ENCODE measurements at regions of chr17 and their contacts with region 1.

Region 1: DNA sequence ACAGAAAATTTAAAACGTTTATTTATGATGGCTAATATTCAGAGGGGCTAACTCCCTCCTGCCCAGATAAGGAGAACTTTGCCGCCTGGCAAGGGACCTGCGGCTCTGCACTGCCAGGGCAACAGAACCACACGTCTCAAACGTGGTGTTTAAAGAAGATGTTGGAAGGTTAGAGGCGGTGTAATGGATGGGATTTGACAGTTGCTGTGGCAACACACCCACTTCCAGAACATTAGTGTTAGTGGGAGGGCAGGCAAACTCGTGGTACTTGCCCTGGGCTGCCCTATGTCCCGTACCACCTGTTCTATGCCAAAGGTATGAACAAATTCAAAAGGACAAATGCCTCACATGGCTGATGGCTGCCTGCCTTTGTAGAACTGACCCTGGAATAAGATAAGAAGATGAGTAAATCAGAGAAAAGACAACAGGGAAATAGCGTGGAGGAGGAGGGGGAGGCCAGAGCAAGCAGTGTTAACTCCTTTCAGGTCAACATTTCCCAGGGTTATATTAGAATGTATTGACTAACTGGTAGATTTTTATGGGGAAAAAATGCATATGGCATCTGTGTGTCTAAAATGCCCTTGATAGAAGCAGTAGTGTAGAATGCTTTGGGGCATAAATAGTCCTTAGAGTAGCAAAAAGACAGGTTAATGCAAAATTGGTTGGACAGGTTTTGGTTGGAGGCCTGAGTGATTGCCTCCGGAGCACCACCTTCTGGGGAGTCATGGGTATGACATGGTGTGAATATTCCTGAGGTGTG is 30.8 kb downstream of the HLF start:
- DNase-seq: peak; percentile 70 to 84
- H3K4me3 ChIP-seq: no peak overlapping the region
- H3K4me3 Mint-ChIP-seq: peak overlapping the region; percentile 35
- H3K27ac Mint-ChIP-seq: peak overlapping the region; percentile 20
- H3K4me1 ChIP-seq: peaks cover 20% of the 10 kb centered on the region
- H3K4me1 Mint-ChIP-seq: peaks cover 13% of the 10 kb centered on the region
- H3K27me3 ChIP-seq: no peaks in the 10 kb centered on the region
- H3K27me3 Mint-ChIP-seq: no peaks in the 10 kb centered on the region
- CTCF ChIP-seq: peak; percentile 89 to 92

Region 2: DNA sequence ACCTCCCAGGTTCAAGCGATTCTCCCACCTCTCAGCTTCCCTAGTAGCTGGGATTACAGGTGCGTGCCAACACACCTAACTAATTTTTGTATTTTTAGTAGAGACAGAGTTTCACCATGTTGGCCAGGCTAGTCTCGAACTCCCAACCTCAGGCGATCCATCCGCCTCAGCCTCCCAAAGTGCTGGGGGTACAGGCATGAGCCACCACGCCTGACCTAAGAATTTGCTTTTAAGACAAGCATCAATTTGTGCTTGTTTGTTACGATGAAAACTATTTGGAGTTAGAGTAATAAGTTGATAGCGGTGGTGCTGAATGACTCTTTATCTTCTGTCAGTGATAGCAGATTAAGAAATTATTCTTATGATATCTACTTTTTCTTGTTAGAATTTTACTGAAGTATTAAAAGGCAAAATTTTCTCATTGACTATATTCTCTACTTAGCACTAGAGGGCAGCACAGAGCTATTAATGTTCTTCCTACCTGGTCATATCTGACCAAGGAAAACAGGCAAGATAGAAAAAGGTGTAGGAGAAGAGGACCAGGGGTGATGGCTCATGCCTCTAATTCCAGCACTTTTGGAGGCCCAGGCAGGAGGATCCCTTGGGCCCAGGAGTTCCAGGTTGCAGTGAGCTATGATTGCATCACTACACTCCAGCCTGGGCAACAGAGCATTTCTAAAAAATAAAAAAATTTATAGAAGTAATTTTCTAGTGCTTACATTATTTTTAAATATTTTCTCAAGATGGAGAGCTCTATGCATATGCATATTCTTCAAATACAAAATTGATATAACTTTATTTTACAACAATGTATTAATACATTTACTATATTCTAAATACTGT is 302.6 kb before region 1 on chr17:
- CTCF ChIA-PET with region 1: no interaction called
- POLR2A ChIA-PET with region 1: no interaction called
- intact Hi-C with region 1: loop called (anchors 1 kb)
- DNase-seq: peak in 1 of 2 experiments; percentile 56
- H3K4me3 ChIP-seq: no peak overlapping the region
- H3K4me3 Mint-ChIP-seq: no peak overlapping the region
- H3K27ac Mint-ChIP-seq: no peak overlapping the region
- H3K4me1 ChIP-seq: no peaks in the 10 kb centered on the region
- H3K4me1 Mint-ChIP-seq: no peaks in the 10 kb centered on the region
- H3K27me3 ChIP-seq: no peaks in the 10 kb centered on the region
- H3K27me3 Mint-ChIP-seq: no peaks in the 10 kb centered on the region
- CTCF ChIP-seq: peak; percentile 60 to 64

Region 3: GRCh38 chr17:55264645-55265298 is 30.8 kb before region 1 on chr17 and contains the start of gene HLF:
- CTCF ChIA-PET with region 1: interaction called, 7 read pairs
- POLR2A ChIA-PET with region 1: no interaction called
- intact Hi-C with region 1: loop called (anchors 1 kb)
- DNase-seq: peak; percentile 83 to 91
- H3K4me3 ChIP-seq: peak within 1 kb of the TSS; percentile 66
- H3K4me3 Mint-ChIP-seq: peak within 1 kb of the TSS; percentile 84
- H3K27ac Mint-ChIP-seq: peak within 1 kb of the TSS; percentile 39
- H3K4me1 ChIP-seq: no peaks in the 10 kb centered on the region
- H3K4me1 Mint-ChIP-seq: peaks cover 14% of the 10 kb centered on the region
- H3K27me3 ChIP-seq: no peaks in the 10 kb centered on the region
- H3K27me3 Mint-ChIP-seq: no peaks in the 10 kb centered on the region
- CTCF ChIP-seq: no peak
- total RNA-seq, gene HLF: 17.3 and 19.8 TPM in 2 replicates

Region 4: DNA sequence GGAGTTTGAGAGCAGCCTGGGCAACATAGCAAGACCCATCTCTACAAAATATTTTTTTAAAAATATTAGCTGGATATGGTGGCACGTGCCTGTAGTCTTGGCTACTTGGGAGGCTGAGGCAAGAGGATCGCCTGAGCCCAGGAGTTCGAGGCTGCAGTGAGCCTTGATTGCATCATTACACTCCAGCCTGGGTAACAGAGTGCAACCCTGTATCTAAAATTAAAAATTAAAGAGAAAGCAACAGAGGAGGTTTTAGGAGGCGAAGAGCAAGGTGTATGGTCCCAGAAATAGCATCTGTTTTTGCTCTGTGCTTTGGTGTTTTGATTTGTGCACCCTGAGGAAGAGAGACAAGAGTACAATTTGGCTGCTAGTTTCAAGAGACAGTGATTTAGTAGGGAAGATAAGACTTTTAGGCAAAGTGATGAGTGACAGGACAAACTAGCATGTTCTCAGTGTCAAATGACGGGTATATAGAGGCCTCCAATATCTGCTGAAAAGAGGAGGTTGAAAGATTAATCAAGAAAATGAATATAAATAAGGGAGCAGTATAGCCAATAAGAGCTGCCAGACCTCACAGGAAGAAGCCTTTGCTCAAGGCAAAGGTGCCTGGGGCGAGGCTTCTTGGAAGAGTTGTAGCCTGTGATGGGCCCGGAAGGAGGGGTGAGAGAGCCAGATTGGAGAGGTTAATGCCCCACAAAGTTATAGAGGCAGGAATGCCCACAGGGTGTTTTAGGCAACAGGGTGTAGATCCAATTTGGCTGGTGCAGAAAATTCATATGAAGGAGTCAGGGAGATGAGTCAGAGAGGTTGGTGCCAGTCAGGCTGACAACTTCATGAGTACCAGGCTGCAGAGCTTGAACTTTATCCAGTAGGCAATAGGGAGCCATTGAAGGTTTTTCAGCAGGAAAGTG is 19.4 kb before region 1 on chr17:
- CTCF ChIA-PET with region 1: no interaction called
- POLR2A ChIA-PET with region 1: no interaction called
- intact Hi-C with region 1: no loop called
- DNase-seq: no peak
- H3K4me3 ChIP-seq: no peak overlapping the region
- H3K4me3 Mint-ChIP-seq: no peak overlapping the region
- H3K27ac Mint-ChIP-seq: no peak overlapping the region
- H3K4me1 ChIP-seq: no peaks in the 10 kb centered on the region; the same call in 1 of the 2 replicates
- H3K4me1 Mint-ChIP-seq: peaks cover 10% of the 10 kb centered on the region
- H3K27me3 ChIP-seq: no peaks in the 10 kb centered on the region
- H3K27me3 Mint-ChIP-seq: no peaks in the 10 kb centered on the region
- CTCF ChIP-seq: no peak

Measured in Caco-2 (cell line).